ENCODE measurements at regions of chr9 and their contacts with region 1.

Region 1: GRCh38 chr9:129320575-129321263 is 142.7 kb upstream of the IER5L start:
- DNase-seq: peak in 9 of 10 donors; percentile 47 to 79 (median 67)
- ATAC-seq: peak; percentile 93 to 97
- H3K4me3 Mint-ChIP-seq: peak overlapping the region; percentile 74 to 94 (median 89)
- H3K27ac Mint-ChIP-seq: peak overlapping the region; percentile 59 to 96 (median 90)
- H3K4me1 Mint-ChIP-seq: peaks cover 10 to 26% (median 17%) of the 10 kb centered on the region in 4 donors
- H3K27me3 Mint-ChIP-seq: peaks cover 0 to 3% (median 0%) of the 10 kb centered on the region in 5 donors

Region 2: DNA sequence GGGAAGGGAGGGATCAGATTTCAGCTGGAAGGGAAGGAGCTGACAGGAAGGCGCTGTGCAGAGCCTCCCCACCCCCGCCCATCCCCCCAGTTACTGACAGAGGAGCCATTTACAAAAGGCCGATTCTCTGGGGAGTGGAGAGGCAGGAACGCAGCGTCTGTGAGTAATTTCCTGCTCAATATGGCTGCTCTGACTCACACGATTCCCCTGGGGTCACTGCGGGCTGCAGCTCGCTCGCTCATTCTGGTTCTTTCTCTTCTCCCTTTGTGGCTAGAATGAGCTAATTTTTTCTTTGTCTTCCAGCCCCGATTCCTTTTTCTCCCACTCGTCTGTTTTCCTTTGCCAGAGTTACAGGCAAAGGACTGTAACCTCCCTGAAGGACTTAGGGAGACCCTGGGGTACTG is 180.7 kb before region 1 on chr9:
- POLR2A ChIA-PET with region 1: interaction called, 10 read pairs
- DNase-seq: peak; percentile 51 to 88 (median 66)
- ATAC-seq: peak; percentile 86
- H3K4me3 Mint-ChIP-seq: peak overlapping the region; percentile 83 to 96 (median 92)
- H3K27ac Mint-ChIP-seq: peak overlapping the region; percentile 92 to 99 (median 98)
- H3K4me1 Mint-ChIP-seq: peaks cover 16 to 43% (median 34%) of the 10 kb centered on the region in 4 donors
- H3K27me3 Mint-ChIP-seq: no peaks in the 10 kb centered on the region

Region 3: DNA sequence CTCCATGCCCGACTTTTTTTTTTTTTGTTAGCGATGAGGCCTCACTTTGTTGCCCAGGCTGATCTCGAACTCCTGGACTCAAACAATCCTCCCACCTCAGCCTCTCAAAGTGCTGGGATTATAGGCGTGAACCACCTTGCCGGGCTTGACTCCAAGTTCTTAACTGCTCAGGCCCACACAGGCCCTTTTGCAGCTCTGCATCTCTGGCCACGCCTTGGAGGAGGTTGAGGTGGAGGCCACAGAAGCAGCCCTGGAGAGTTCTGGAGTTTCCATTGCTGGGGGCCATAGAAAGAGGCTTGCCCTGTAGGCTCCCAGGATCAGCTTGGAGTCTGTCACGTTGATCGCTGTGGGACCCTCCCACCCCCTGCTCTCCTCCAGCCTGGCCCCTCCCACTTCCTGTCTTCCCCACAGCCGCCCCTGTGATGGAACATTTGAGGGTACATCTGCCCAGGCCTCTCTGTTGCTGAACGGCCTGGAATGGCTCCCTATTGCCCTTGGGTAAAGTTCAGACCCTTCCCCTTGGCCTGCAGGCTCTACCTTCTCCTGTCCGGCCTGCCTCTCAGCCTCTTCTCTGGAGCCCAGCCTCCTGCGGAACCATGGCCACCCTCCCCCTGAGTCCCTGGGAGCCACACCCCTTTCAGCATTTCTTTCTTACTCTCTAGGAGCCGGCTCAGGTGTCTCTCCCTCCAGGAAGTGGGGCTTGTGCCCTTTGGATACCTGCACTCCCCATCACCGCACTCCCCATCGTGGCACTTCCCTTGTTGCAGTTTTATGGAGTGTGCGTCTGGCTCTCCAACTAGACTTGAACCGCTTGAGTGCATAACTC is 112.3 kb before region 1 on chr9:
- POLR2A ChIA-PET with region 1: interaction called, 11 read pairs
- DNase-seq: peak; percentile 27 to 82 (median 50)
- ATAC-seq: peak; percentile 63 to 80
- H3K4me3 Mint-ChIP-seq: peak overlapping the region; percentile 76 to 95 (median 88)
- H3K27ac Mint-ChIP-seq: peak overlapping the region; percentile 83 to 98 (median 95)
- H3K4me1 Mint-ChIP-seq: peaks cover 24 to 58% (median 41%) of the 10 kb centered on the region in 4 donors
- H3K27me3 Mint-ChIP-seq: no peaks in the 10 kb centered on the region

Region 4: DNA sequence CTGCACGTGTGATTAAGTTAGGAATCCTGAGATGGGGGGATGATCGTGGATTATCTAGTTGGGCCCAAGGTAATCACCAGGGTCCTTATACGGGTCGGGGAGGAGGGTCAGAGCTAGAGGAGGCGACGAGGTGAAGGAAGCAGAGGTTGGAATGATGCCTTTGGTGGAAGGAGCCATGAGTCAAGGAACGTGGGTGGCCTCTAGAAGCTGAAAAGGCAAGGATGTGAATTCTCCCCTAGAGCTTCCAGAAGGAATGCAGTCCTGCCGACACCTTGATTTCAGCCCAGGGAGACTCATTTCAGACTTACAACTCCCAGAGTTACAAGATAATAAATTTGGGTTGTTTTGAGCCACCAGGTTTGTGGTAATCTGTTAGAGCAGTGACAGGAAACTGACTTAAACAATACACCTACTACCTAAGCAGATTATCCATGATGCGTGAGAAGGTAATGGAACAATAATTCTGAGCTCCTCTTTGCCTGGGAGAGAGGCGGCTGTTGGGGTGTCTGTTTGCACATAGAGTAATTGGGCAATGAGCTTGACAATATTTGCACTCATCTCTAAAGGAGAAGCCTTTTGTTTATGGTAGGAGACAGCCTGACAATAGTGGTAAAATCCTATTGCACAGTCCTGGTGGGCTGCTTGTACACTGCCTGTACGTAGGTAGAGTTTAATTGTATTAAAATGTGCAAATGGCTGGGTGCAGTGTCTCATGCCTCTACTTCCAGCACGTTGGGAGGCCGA is 13.3 kb before region 1 on chr9:
- POLR2A ChIA-PET with region 1: interaction called, 10 read pairs
- DNase-seq: peak in 1 of 10 donors; percentile 15
- ATAC-seq: peak; percentile 40 to 46
- H3K4me3 Mint-ChIP-seq: no peak overlapping the region
- H3K27ac Mint-ChIP-seq: peak overlapping the region in 3 of 10 donors; percentile 65 to 75 (median 73)
- H3K4me1 Mint-ChIP-seq: peaks cover 7 to 11% (median 9%) of the 10 kb centered on the region in 4 donors
- H3K27me3 Mint-ChIP-seq: no peaks in the 10 kb centered on the region

Region 5: GRCh38 chr9:129333953-129334724 is 13.4 kb after region 1 on chr9:
- POLR2A ChIA-PET with region 1: interaction called, 10 read pairs
- DNase-seq: peak in 7 of 10 donors; percentile 23 to 68 (median 28)
- ATAC-seq: peak; percentile 60 to 66
- H3K4me3 Mint-ChIP-seq: peak overlapping the region; percentile 26 to 97 (median 81)
- H3K27ac Mint-ChIP-seq: peak overlapping the region; percentile 12 to 94 (median 86)
- H3K4me1 Mint-ChIP-seq: peaks cover 22 to 41% (median 32%) of the 10 kb centered on the region in 4 donors
- H3K27me3 Mint-ChIP-seq: no peaks in the 10 kb centered on the region

Region 6: GRCh38 chr9:129362287-129363000 is 41.7 kb after region 1 on chr9:
- POLR2A ChIA-PET with region 1: no interaction called
- DNase-seq: no peak
- ATAC-seq: no peak
- H3K4me3 Mint-ChIP-seq: no peak overlapping the region
- H3K27ac Mint-ChIP-seq: peak overlapping the region in 2 of 10 donors; percentile 44 to 57
- H3K4me1 Mint-ChIP-seq: peaks cover 0 to 2% (median 0%) of the 10 kb centered on the region in 4 donors
- H3K27me3 Mint-ChIP-seq: no peaks in the 10 kb centered on the region

Measured in naive thymus-derived CD8-positive, alpha-beta T cell (primary cell).